ENCODE measurements at regions of chr14 and their contacts with region 1.

Region 1: GRCh38 chr14:59360923-59361794 is 104.0 kb downstream of the GPR135 start:
- DNase-seq: peak; percentile 87

Region 2: DNA sequence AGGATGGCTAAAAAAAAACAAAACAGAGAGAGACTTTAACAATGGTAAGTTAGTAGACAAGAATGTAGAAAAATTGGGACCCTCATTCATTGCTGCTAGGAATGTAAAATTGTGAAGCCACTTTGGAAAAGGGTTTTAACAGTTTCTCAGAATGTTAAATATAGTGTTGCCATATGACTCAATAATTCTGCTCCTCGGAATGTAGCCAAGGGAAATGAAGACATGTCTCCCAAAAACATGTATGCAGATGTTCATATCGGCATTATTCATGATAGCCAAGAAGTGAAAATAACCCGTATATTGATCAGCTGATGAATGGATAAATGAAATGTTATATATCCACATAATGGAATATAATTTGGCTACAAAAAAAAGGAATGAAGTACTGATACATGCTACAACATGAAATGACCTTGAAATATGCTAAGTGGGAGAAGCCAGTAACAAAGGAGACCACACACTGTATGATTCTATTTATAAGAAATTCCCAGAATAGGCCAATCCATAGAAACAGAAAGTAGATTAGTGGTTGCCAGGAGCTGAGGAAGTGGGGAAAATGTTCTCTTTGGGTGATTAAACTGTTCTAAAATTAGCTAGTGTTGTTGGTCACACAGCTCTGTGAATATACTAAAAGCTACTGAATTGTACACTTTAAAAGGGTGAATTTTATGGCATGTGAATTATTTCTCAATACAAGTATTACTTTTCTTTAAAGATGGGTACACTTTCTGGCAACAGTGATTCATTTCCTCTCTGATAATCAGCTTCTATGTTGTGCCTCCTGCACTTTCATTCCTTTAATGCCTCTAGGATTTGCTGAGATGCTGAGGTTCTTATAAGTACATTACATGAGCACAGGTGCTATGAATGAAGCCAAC is 40.2 kb before region 1 on chr14:
- intact Hi-C with region 1: loop called (anchors 5 kb)
- DNase-seq: no peak

Region 3: DNA sequence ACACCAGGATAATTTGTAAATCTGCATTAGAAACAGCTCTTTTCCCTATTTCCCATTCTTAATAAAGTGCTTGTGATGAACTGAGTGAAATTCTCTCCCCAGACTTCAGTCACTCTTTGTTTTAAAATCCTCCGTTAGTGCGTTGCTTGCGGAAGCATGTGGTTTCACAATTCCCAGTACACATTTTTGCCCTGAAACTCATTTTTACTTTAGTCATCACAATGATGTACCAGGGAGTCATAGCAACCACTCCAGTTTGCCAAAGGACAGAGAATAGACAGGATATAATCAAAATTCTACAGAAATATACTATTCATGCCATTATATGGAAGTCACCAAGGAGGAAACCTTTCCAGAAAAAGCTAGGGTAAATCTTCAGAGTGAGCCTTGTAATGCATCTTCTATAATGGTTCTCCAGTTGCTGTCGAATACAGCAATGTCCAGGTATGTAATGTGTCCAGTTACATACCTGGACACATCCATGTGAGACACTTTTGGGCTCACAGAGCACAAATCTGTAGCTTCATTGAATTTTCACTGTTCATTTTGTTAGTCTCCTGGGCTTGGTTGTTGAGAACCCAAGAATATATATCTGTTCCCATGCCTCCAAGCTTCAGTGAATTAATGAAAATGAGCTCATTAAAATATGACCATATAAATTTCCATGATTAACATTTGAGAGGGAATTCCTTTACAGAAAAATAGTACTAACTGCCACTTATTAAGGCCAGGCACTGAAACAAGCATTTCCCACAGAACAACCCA is 46.3 kb after region 1 on chr14:
- intact Hi-C with region 1: loop called (anchors 5 kb)
- DNase-seq: no peak